ENCODE measurements at regions of chr3 and their contacts with region 1.

Region 1: GRCh38 chr3:115783938-115784738 is 160.8 kb downstream of the GAP43 start:
- DNase-seq: peak; percentile 93
- H3K4me3 ChIP-seq: peak overlapping the region; percentile 46 to 75 (median 69)
- H3K27ac ChIP-seq: peak overlapping the region; percentile 89 to 95 (median 90)
- H3K4me1 ChIP-seq: peaks cover 0 to 16% (median 9%) of the 10 kb centered on the region in 4 donors
- H3K27me3 ChIP-seq: no peaks in the 10 kb centered on the region
- CTCF ChIP-seq: peak; percentile 85 to 99 (median 99)
- EP300 ChIP-seq: no peak
- POLR2A ChIP-seq: peak; percentile 70

Region 2: GRCh38 chr3:115217678-115218451 is 566.3 kb before region 1 on chr3:
- in situ Hi-C with region 1: loop called in 1 of 4 experiments (anchors 25 kb)
- intact Hi-C with region 1: loop called (anchors 10 kb)
- DNase-seq: peak; percentile 52
- H3K4me3 ChIP-seq: no peak overlapping the region
- H3K27ac ChIP-seq: peak overlapping the region in 1 of 4 donors; percentile 37
- H3K4me1 ChIP-seq: peaks cover 0 to 22% (median 8%) of the 10 kb centered on the region in 4 donors
- H3K27me3 ChIP-seq: no peaks in the 10 kb centered on the region
- CTCF ChIP-seq: peak; percentile 50 to 64 (median 60)
- EP300 ChIP-seq: no peak
- POLR2A ChIP-seq: no peak

Measured in transverse colon (tissue), 4 donors.